CD4-positive, alpha-beta memory T cell (primary cell): ENCODE measurements at regions of chr9 and their contacts with region 1.

Region 1: DNA sequence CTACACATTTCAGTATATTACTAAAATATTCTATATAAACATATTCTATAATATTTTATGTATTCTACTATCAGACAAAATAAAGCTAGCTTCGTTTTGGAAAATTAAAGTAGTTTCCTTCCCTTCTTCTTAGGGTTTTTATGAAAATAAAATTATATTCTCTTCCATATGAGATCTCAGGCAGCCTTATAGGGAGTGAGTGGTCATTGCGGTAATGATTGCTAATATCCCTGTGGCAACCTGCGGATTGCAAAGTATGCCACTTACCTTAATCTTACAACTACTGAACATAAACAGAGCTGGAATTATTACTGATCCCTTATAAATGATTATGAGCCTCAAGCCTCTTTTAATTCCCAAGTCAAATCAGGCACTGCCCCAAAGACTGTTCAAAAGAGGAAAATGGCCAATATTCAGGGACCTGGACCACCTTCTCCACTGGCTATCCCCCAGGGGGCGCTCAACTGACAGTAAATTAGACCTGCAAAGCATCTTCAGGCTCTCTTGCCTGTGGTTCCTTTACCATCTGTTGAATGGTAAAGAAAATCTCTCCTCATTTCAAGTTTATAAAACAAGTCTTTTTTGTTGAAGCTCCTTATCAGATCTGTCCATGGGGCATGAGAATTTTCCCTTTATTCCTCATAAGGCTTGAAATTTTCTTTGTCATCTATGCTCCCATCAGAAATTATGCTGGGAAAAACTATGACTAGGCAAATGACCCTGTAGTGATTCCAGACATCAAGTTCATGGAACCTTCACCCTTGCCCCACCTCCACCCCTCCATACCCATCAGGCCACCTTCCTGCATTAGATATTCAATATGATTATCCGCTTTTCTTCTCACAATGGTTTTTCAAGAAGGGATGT is 163.9 kb downstream of the CEMIP2 start:
- DNase-seq: peak; percentile 73 to 79 (median 75)
- H3K4me3 ChIP-seq: no peak overlapping the region
- H3K4me3 Mint-ChIP-seq: no peak overlapping the region
- H3K27ac ChIP-seq: no peak overlapping the region
- H3K27ac Mint-ChIP-seq: no peak overlapping the region
- H3K4me1 ChIP-seq: no peaks in the 10 kb centered on the region
- H3K4me1 Mint-ChIP-seq: no peaks in the 10 kb centered on the region
- H3K27me3 ChIP-seq: no peaks in the 10 kb centered on the region
- H3K27me3 Mint-ChIP-seq: no peaks in the 10 kb centered on the region

Region 2: GRCh38 chr9:71270554-71270953 is 333.9 kb before region 1 on chr9:
- CTCF ChIA-PET with region 1: no interaction called
- POLR2A ChIA-PET with region 1: no interaction called
- intact Hi-C with region 1: no loop called
- DNase-seq: no peak
- H3K4me3 ChIP-seq: no peak overlapping the region
- H3K4me3 Mint-ChIP-seq: no peak overlapping the region
- H3K27ac ChIP-seq: no peak overlapping the region
- H3K27ac Mint-ChIP-seq: no peak overlapping the region
- H3K4me1 ChIP-seq: no peaks in the 10 kb centered on the region
- H3K4me1 Mint-ChIP-seq: no peaks in the 10 kb centered on the region
- H3K27me3 ChIP-seq: no peaks in the 10 kb centered on the region
- H3K27me3 Mint-ChIP-seq: peaks cover 0 to 4% of the 10 kb centered on the region in 2 donors

Region 3: GRCh38 chr9:71285191-71285656 is 319.2 kb before region 1 on chr9:
- CTCF ChIA-PET with region 1: interaction called, 3 read pairs
- POLR2A ChIA-PET with region 1: no interaction called
- intact Hi-C with region 1: loop called (anchors 10 kb)
- DNase-seq: peak; percentile 30 to 45 (median 36)
- H3K4me3 ChIP-seq: no peak overlapping the region
- H3K4me3 Mint-ChIP-seq: no peak overlapping the region
- H3K27ac ChIP-seq: no peak overlapping the region
- H3K27ac Mint-ChIP-seq: no peak overlapping the region
- H3K4me1 ChIP-seq: no peaks in the 10 kb centered on the region
- H3K4me1 Mint-ChIP-seq: no peaks in the 10 kb centered on the region
- H3K27me3 ChIP-seq: no peaks in the 10 kb centered on the region
- H3K27me3 Mint-ChIP-seq: peaks cover 0 to 5% of the 10 kb centered on the region in 2 donors

Region 4: GRCh38 chr9:71663931-71664459 is 59.6 kb after region 1 on chr9:
- CTCF ChIA-PET with region 1: no interaction called
- POLR2A ChIA-PET with region 1: no interaction called
- intact Hi-C with region 1: no loop called
- DNase-seq: no peak
- H3K4me3 ChIP-seq: no peak overlapping the region
- H3K4me3 Mint-ChIP-seq: no peak overlapping the region
- H3K27ac ChIP-seq: no peak overlapping the region
- H3K27ac Mint-ChIP-seq: no peak overlapping the region
- H3K4me1 ChIP-seq: peaks cover 7% of the 10 kb centered on the region
- H3K4me1 Mint-ChIP-seq: peaks cover 0 to 8% (median 7%) of the 10 kb centered on the region in 4 donors
- H3K27me3 ChIP-seq: no peaks in the 10 kb centered on the region
- H3K27me3 Mint-ChIP-seq: peaks cover 0 to 2% of the 10 kb centered on the region in 2 donors

Region 5: GRCh38 chr9:71683598-71684235 is 79.3 kb after region 1 on chr9:
- CTCF ChIA-PET with region 1: interaction called, 31 read pairs
- POLR2A ChIA-PET with region 1: no interaction called
- intact Hi-C with region 1: no loop called
- DNase-seq: no peak
- H3K4me3 ChIP-seq: no peak overlapping the region
- H3K4me3 Mint-ChIP-seq: peak overlapping the region; percentile 31 to 79 (median 69)
- H3K27ac ChIP-seq: no peak overlapping the region
- H3K27ac Mint-ChIP-seq: peak overlapping the region; percentile 8 to 90 (median 72)
- H3K4me1 ChIP-seq: peaks cover 37% of the 10 kb centered on the region
- H3K4me1 Mint-ChIP-seq: peaks cover 36 to 59% (median 48%) of the 10 kb centered on the region in 4 donors
- H3K27me3 ChIP-seq: no peaks in the 10 kb centered on the region
- H3K27me3 Mint-ChIP-seq: no peaks in the 10 kb centered on the region

Region 6: GRCh38 chr9:71911253-71912074 is 307.0 kb after region 1 on chr9 and contains the start of gene C9orf85:
- CTCF ChIA-PET with region 1: interaction called, 4 read pairs
- POLR2A ChIA-PET with region 1: no interaction called
- intact Hi-C with region 1: loop called (anchors 5 kb)
- DNase-seq: peak; percentile 94 to 98 (median 96)
- H3K4me3 ChIP-seq: peak within 1 kb of the TSS; percentile 77 to 83
- H3K4me3 Mint-ChIP-seq: peak within 1 kb of the TSS; percentile 99 to 100 (median 100)
- H3K27ac ChIP-seq: peak within 1 kb of the TSS; percentile 74
- H3K27ac Mint-ChIP-seq: peak within 1 kb of the TSS; percentile 92 to 100 (median 97)
- H3K4me1 ChIP-seq: peaks cover 51% of the 10 kb centered on the region
- H3K4me1 Mint-ChIP-seq: peaks cover 46 to 76% (median 54%) of the 10 kb centered on the region in 4 donors
- H3K27me3 ChIP-seq: no peaks in the 10 kb centered on the region
- H3K27me3 Mint-ChIP-seq: no peaks in the 10 kb centered on the region
- total RNA-seq, gene C9orf85: 8.2 to 10.6 TPM

Region 7: GRCh38 chr9:72271613-72272478 is 667.4 kb after region 1 on chr9:
- CTCF ChIA-PET with region 1: interaction called, 3 read pairs
- POLR2A ChIA-PET with region 1: no interaction called
- intact Hi-C with region 1: loop called (anchors 1 kb)
- DNase-seq: peak in 4 of 5 donors; percentile 18 to 28 (median 23)
- H3K4me3 ChIP-seq: no peak overlapping the region
- H3K4me3 Mint-ChIP-seq: no peak overlapping the region
- H3K27ac ChIP-seq: no peak overlapping the region
- H3K27ac Mint-ChIP-seq: no peak overlapping the region
- H3K4me1 ChIP-seq: no peaks in the 10 kb centered on the region
- H3K4me1 Mint-ChIP-seq: no peaks in the 10 kb centered on the region
- H3K27me3 ChIP-seq: no peaks in the 10 kb centered on the region
- H3K27me3 Mint-ChIP-seq: peaks cover 3 to 9% of the 10 kb centered on the region in 2 donors